IMR-90 (cell line): ENCODE measurements at regions of chr2 and their contacts with region 1.

Region 1: DNA sequence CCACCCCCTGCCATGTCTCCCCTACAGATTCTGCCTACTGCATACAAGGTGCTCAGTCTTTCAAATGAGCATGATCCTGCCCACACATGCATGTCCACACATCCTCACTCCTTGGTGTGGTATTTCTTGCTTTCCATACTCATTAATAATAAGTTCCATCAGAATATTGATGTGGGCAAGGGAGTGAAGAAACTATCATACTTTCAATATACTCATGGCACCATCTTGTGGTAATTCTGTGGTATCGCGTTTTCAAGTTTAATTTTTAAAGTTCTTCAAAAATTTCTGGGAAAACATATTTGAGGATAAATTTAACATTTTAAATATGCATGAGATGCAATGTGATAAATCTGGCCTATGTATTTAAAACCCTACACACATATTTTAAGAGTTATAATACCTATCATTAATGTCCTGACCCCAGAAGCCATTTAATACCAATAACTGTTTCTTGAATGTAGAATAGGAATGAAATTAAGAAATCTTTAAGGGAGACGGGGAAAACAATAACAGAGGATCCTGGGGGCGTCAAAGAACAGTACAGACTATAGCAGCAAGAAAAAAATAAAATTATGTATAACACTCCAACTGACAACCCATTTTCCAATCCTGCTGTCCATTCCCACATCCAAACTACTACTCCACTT is 110.1 kb downstream of the ZNF385B start:
- DNase-seq: peak; percentile 47
- ATAC-seq: peak; percentile 63; the same call in 1 of the 2 replicates
- H3K4me3 ChIP-seq: no peak overlapping the region
- H3K27ac ChIP-seq: no peak overlapping the region
- H3K4me1 ChIP-seq: no peaks in the 10 kb centered on the region
- H3K27me3 ChIP-seq: no peaks in the 10 kb centered on the region
- CTCF ChIP-seq: peak; percentile 81
- POLR2A ChIP-seq: no peak
- RAD21 ChIP-seq: peak; percentile 90

Region 2: DNA sequence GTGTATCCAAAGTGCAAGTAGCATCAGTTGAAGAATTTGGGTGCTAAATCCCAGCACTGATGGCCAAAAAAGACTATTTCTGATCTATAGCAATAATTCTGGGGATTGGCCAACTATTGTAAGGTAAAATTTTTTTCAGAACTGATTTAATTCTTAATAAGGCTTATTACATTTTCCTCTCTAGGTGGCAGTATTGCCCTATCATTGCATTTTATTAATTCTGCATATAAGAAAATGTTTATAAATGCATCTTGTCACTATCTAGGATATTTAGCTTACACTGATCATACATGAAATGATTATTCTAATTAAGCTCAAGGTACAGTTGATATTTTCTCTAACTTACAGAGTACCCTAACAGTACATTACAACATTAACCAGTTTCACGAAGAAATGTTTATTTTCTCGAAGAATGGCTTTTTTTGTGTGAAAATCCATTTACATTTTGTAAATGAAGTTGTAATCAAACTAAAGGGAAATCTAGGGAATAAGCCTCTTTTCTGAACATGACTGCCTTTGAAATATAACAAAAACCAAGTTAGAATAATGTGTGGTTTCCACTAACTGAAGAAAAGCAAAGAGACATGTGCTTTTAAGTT is 955.1 kb before region 1 on chr2:
- CTCF ChIA-PET with region 1: no interaction called
- POLR2A ChIA-PET with region 1: no interaction called
- dilution Hi-C with region 1: no loop called
- in situ Hi-C with region 1: no loop called
- intact Hi-C with region 1: loop called (anchors 2 kb)
- DNase-seq: peak; percentile 50
- ATAC-seq: no peak
- H3K4me3 ChIP-seq: no peak overlapping the region
- H3K27ac ChIP-seq: no peak overlapping the region
- H3K4me1 ChIP-seq: no peaks in the 10 kb centered on the region
- H3K27me3 ChIP-seq: no peaks in the 10 kb centered on the region; the same call in 1 of the 2 replicates
- CTCF ChIP-seq: peak; percentile 65
- POLR2A ChIP-seq: no peak
- RAD21 ChIP-seq: peak; percentile 67

Region 3: GRCh38 chr2:179354739-179355537 is 396.3 kb before region 1 on chr2:
- CTCF ChIA-PET with region 1: no interaction called
- POLR2A ChIA-PET with region 1: no interaction called
- dilution Hi-C with region 1: no loop called
- in situ Hi-C with region 1: no loop called
- intact Hi-C with region 1: loop called (anchors 2 kb)
- DNase-seq: peak; percentile 14
- ATAC-seq: peak; percentile 56; the same call in 1 of the 2 replicates
- H3K4me3 ChIP-seq: no peak overlapping the region
- H3K27ac ChIP-seq: no peak overlapping the region
- H3K4me1 ChIP-seq: no peaks in the 10 kb centered on the region
- H3K27me3 ChIP-seq: peaks cover 2% of the 10 kb centered on the region; the same call in 1 of the 2 replicates
- CTCF ChIP-seq: peak; percentile 51
- POLR2A ChIP-seq: no peak
- RAD21 ChIP-seq: no peak

Region 4: GRCh38 chr2:179422037-179422643 is 329.1 kb before region 1 on chr2:
- CTCF ChIA-PET with region 1: interaction called, 8 read pairs
- POLR2A ChIA-PET with region 1: no interaction called
- dilution Hi-C with region 1: no loop called
- in situ Hi-C with region 1: loop called (anchors 5 kb)
- intact Hi-C with region 1: loop called (anchors 1 kb)
- DNase-seq: peak; percentile 77
- ATAC-seq: peak; percentile 89
- H3K4me3 ChIP-seq: no peak overlapping the region
- H3K27ac ChIP-seq: no peak overlapping the region
- H3K4me1 ChIP-seq: no peaks in the 10 kb centered on the region
- H3K27me3 ChIP-seq: no peaks in the 10 kb centered on the region
- CTCF ChIP-seq: peak; percentile 89
- POLR2A ChIP-seq: no peak
- RAD21 ChIP-seq: peak; percentile 93

Region 5: GRCh38 chr2:179946810-179947615 is 195.7 kb after region 1 on chr2:
- CTCF ChIA-PET with region 1: no interaction called
- POLR2A ChIA-PET with region 1: no interaction called
- dilution Hi-C with region 1: no loop called
- in situ Hi-C with region 1: no loop called
- intact Hi-C with region 1: no loop called
- DNase-seq: no peak
- ATAC-seq: no peak
- H3K4me3 ChIP-seq: no peak overlapping the region
- H3K27ac ChIP-seq: no peak overlapping the region
- H3K4me1 ChIP-seq: no peaks in the 10 kb centered on the region
- H3K27me3 ChIP-seq: no peaks in the 10 kb centered on the region
- CTCF ChIP-seq: no peak
- POLR2A ChIP-seq: no peak
- RAD21 ChIP-seq: no peak

Region 6: GRCh38 chr2:180077295-180077906 is 326.1 kb after region 1 on chr2:
- CTCF ChIA-PET with region 1: no interaction called
- POLR2A ChIA-PET with region 1: no interaction called
- dilution Hi-C with region 1: no loop called
- in situ Hi-C with region 1: no loop called
- intact Hi-C with region 1: loop called (anchors 5 kb)
- DNase-seq: peak; percentile 22
- ATAC-seq: peak; percentile 77
- H3K4me3 ChIP-seq: no peak overlapping the region
- H3K27ac ChIP-seq: no peak overlapping the region
- H3K4me1 ChIP-seq: no peaks in the 10 kb centered on the region
- H3K27me3 ChIP-seq: no peaks in the 10 kb centered on the region; the same call in 1 of the 2 replicates
- CTCF ChIP-seq: peak; percentile 80
- POLR2A ChIP-seq: no peak
- RAD21 ChIP-seq: peak; percentile 79